Activated CD4-positive, alpha-beta T cell treated with anti-CD3 and anti-CD28 coated beads for 36 hours (primary cell): ENCODE measurements at regions of chr14 and their contacts with region 1.

Region 1: GRCh38 chr14:24241829-24242443 is 487 bp downstream of the TINF2 start:
- DNase-seq: peak; percentile 97
- ATAC-seq: peak; percentile 83
- H3K4me3 Mint-ChIP-seq: peak overlapping the region; percentile 94
- H3K27ac Mint-ChIP-seq: peak overlapping the region; percentile 99
- H3K4me1 Mint-ChIP-seq: peaks cover 55% of the 10 kb centered on the region
- H3K27me3 Mint-ChIP-seq: no peaks in the 10 kb centered on the region

Region 2: GRCh38 chr14:24135834-24136542 is 105.9 kb before region 1 on chr14 and contains the start of gene PSME1:
- CTCF ChIA-PET with region 1: interaction called, 5 read pairs
- POLR2A ChIA-PET with region 1: interaction called, 7 read pairs
- intact Hi-C with region 1: loop called in 1 of 2 experiments (anchors 1 kb)
- DNase-seq: peak; percentile 98
- ATAC-seq: peak; percentile 95
- H3K4me3 Mint-ChIP-seq: peak within 1 kb of the TSS; percentile 92
- H3K27ac Mint-ChIP-seq: peak within 1 kb of the TSS; percentile 92
- H3K4me1 Mint-ChIP-seq: peaks cover 50% of the 10 kb centered on the region
- H3K27me3 Mint-ChIP-seq: no peaks in the 10 kb centered on the region
- total RNA-seq, gene PSME1: 414 to 418 TPM

Region 3: DNA sequence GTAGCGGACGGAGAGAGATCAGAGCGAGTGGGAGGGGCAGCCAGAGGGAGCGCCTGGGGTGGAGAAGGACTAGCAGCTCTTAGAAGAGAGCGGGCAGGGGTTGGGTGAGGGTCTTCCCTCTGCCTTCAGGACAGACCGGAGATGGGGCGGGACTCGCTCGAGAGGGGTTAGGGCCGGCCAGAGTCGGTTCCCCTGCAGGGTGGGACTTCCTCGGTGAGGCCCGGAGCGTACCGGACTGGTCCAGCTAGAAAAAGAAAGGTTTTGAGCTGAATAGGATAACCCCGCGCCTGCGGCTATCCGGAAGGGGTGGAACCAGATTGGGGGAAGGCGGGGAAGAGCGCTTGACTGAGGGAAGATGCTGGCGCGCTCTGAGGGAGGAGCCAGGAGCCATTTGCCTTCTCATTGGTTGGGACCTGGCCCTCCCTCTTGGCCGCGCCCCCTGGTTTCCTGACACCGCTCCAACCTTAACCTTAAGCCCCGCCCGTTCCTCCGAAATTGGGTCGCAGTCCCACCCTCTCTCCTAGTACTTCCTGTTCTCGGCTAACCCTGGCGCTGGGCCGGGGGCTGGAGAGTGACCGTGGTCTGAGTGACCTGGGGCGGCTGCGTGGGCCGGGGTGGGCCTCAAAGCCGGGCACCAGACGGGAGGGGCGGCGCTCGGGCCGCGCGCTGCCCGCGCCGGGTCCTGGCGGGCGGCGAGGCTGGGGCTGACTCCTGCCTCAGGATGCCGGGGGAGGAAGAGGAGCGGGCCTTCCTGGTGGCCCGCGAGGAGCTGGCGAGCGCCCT is 94.8 kb before region 1 on chr14 and contains the start of gene RNF31:
- CTCF ChIA-PET with region 1: interaction called, 4 read pairs
- POLR2A ChIA-PET with region 1: interaction called, 7 read pairs
- intact Hi-C with region 1: loop called in 1 of 2 experiments (anchors 1 kb)
- DNase-seq: peak; percentile 99
- ATAC-seq: peak; percentile 89
- H3K4me3 Mint-ChIP-seq: peak within 1 kb of the TSS; percentile 94
- H3K27ac Mint-ChIP-seq: peak within 1 kb of the TSS; percentile 97
- H3K4me1 Mint-ChIP-seq: peaks cover 57% of the 10 kb centered on the region
- H3K27me3 Mint-ChIP-seq: no peaks in the 10 kb centered on the region
- total RNA-seq, gene RNF31: 73.7 to 98.4 TPM

Region 4: GRCh38 chr14:24188251-24189058 is 53.5 kb before region 1 on chr14 and contains the start of gene IPO4:
- CTCF ChIA-PET with region 1: interaction called, 8 read pairs
- POLR2A ChIA-PET with region 1: interaction called, 3 read pairs
- intact Hi-C with region 1: loop called (anchors 1 to 2 kb)
- DNase-seq: peak; percentile 97
- ATAC-seq: peak; percentile 92
- H3K4me3 Mint-ChIP-seq: peak within 1 kb of the TSS; percentile 89
- H3K27ac Mint-ChIP-seq: peak within 1 kb of the TSS; percentile 83
- H3K4me1 Mint-ChIP-seq: peaks cover 40% of the 10 kb centered on the region
- H3K27me3 Mint-ChIP-seq: no peaks in the 10 kb centered on the region
- total RNA-seq, gene IPO4: 73.4 to 73.7 TPM

Region 5: DNA sequence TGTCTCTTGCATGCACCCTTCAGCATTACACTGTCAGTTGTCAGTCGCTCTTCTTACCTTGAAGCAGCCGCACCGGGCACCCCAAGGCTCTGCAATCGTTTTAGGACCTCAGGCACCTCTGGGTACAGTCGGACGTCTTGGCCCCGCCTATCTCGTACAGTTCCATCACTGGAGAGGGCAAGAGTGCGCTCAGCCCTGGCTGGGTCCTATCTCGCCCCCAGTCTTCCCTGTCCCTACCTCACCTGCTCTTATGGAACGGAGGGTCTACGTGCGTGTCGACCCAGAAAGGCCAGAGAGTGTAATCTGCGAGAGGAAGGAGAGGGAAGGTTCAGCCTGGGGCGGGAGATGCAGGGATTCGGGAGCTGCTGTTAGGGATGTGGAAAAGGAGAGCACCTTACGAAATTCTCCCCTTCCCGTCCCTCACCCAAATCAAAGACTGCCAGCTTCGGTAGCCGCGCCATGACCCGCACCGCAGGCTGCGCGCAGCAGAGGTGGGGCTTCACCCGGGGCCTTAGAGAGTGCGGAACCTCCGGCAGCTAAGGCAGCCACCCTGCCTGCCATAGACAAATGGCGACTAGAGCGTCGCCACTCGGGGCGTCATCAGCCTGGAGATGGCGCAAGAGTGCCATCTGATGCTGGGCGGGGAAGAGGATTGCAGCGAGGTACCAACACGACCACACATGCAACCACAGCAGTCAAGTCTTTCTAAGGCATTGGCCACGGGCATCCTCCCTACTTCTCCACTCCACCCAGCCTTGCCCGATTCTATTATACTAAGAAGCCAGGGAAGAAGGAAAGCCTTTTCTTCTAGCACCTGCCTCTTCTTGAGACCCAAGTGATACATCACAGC is 26.2 kb before region 1 on chr14 and contains the start of gene MDP1:
- CTCF ChIA-PET with region 1: interaction called, 24 read pairs
- POLR2A ChIA-PET with region 1: interaction called, 18 read pairs
- intact Hi-C with region 1: loop called (anchors 1 kb)
- DNase-seq: peak; percentile 93
- ATAC-seq: peak; percentile 76
- H3K4me3 Mint-ChIP-seq: peak within 1 kb of the TSS; percentile 92
- H3K27ac Mint-ChIP-seq: peak within 1 kb of the TSS; percentile 95
- H3K4me1 Mint-ChIP-seq: peaks cover 44% of the 10 kb centered on the region
- H3K27me3 Mint-ChIP-seq: no peaks in the 10 kb centered on the region
- total RNA-seq, gene MDP1: 4.5 to 11.7 TPM

Region 6: GRCh38 chr14:24289649-24290249 is 47.8 kb after region 1 on chr14:
- CTCF ChIA-PET with region 1: interaction called, 20 read pairs
- POLR2A ChIA-PET with region 1: interaction called, 10 read pairs
- intact Hi-C with region 1: no loop called
- DNase-seq: peak; percentile 88
- ATAC-seq: peak; percentile 99
- H3K4me3 Mint-ChIP-seq: peak overlapping the region; percentile 21
- H3K27ac Mint-ChIP-seq: peak overlapping the region; percentile 25
- H3K4me1 Mint-ChIP-seq: peaks cover 28% of the 10 kb centered on the region
- H3K27me3 Mint-ChIP-seq: no peaks in the 10 kb centered on the region

Region 7: GRCh38 chr14:24442273-24443052 is 200.5 kb after region 1 on chr14 and contains the start of gene SDR39U1:
- CTCF ChIA-PET with region 1: interaction called, 3 read pairs
- POLR2A ChIA-PET with region 1: no interaction called
- intact Hi-C with region 1: loop called in 1 of 2 experiments (anchors 1 kb)
- DNase-seq: peak; percentile 98
- ATAC-seq: peak; percentile 92
- H3K4me3 Mint-ChIP-seq: peak within 1 kb of the TSS; percentile 97
- H3K27ac Mint-ChIP-seq: peak within 1 kb of the TSS; percentile 99
- H3K4me1 Mint-ChIP-seq: peaks cover 41% of the 10 kb centered on the region
- H3K27me3 Mint-ChIP-seq: no peaks in the 10 kb centered on the region
- total RNA-seq, gene SDR39U1: 40.9 to 47.8 TPM